HEK293 (cell line): ENCODE measurements at regions of chr22 and their contacts with region 1.

Region 1: DNA sequence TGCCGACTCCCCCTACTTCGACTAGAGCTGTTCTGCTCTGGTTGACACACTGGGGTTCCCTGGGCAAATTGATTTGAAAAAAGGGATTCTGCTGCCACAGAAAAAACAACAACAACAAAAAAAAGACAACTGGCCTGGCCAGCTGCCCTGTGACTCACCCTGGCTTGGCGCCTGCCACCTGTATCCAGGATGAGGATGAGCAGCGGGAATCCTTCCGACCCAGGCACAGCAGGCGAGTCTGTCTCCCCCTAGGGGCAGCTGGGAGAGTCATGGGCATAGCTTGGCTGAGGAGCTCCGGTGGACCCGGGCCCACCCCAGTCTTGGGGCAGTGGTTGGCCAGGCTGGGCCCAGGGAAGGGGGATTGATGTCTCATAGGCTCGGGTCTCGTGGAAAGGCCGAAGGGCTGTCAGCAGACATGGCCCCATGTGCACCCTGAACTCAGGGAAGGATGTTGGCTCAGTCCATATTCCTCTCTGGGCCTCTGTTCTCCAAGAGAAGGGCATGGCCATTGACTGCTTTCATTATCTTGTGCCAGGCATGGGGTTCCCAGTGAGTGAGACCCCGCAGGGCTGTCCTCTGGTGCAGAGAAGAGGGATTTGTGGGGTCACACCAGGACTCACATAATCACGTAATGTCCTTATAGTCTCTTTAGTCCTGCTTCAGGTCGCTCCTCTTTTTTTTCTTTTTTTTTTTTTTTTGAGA is 10.4 kb upstream of the SUN2 start:
- H3K4me3 ChIP-seq: no peak overlapping the region
- H3K27ac ChIP-seq: no peak overlapping the region
- H3K4me1 ChIP-seq: no peaks in the 10 kb centered on the region
- CTCF ChIP-seq: peak; percentile 73

Region 2: GRCh38 chr22:38638734-38639133 is 127.5 kb before region 1 on chr22:
- CTCF ChIA-PET with region 1: no interaction called
- POLR2A ChIA-PET with region 1: no interaction called
- H3K4me3 ChIP-seq: no peak overlapping the region
- H3K27ac ChIP-seq: no peak overlapping the region
- H3K4me1 ChIP-seq: no peaks in the 10 kb centered on the region
- CTCF ChIP-seq: no peak

Region 3: DNA sequence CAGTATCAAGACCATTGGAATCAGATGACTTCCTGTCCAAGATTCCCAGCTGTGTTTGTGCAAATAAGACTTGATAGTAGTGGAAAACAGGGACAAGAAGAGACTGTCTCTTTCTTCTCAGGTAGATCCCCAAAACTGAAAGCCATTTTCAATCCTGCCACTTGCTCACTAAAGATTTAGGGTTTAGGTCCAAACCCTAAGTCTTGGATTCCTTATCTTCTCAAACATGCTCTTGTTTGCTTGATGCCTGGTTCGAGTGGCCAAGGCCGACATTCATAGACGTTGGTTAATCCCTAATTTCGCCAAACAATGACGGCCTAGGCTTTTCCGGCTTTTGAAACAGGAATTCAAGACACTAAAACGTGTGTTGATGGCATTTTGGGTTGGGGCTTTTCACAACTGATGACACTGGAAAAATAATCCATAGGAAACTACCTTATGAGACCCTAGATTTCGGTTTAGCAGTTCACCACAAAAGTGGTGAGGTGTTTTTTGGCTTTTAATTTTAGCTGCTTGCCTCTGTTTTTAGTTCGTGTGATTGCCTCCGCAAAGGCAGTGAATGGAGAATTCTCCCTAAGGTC is 61.5 kb before region 1 on chr22:
- CTCF ChIA-PET with region 1: no interaction called
- POLR2A ChIA-PET with region 1: no interaction called
- H3K4me3 ChIP-seq: peak overlapping the region; percentile 32
- H3K27ac ChIP-seq: peak overlapping the region; percentile 63
- H3K4me1 ChIP-seq: peaks cover 13% of the 10 kb centered on the region
- CTCF ChIP-seq: no peak

Region 4: DNA sequence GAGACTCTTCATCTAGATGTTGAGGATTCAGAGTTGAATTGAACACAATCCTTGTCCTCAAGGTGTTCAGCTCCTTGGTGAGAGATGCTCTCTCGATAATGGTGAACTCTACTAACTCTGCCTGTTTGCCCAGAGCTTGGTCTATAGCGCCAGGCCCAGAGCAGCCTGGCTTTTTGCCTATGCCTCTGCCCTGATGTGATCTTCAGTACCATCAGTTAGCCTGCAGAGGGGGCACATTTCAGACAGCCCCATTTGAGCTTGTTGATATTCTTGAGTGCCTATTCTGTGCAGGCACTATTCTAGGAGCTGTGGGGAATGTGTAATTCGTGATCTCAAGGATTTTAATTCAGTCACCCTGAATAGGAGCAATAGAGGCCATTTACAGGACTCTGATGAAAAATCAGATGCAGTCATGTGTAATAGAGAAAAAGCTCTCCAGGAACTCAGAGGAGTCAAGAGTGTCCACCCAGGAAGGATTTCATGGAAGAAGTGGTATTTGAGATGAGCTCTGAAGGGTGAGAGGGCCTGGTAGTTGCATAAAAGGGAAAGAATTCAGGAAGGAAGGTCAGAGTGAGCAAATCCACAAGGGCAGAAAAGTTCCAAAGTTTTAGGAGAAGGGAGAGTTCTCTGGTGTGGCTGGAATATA is 41.2 kb before region 1 on chr22:
- CTCF ChIA-PET with region 1: interaction called, 11 read pairs
- POLR2A ChIA-PET with region 1: no interaction called
- H3K4me3 ChIP-seq: no peak overlapping the region
- H3K27ac ChIP-seq: peak overlapping the region; percentile 36; the same call in 1 of the 2 replicates
- H3K4me1 ChIP-seq: no peaks in the 10 kb centered on the region
- CTCF ChIP-seq: peak; percentile 32; the same call in 1 of the 2 replicates

Region 5: GRCh38 chr22:38782402-38783094 is 16.3 kb after region 1 on chr22:
- CTCF ChIA-PET with region 1: interaction called, 43 read pairs
- POLR2A ChIA-PET with region 1: interaction called, 3 read pairs
- H3K4me3 ChIP-seq: no peak overlapping the region
- H3K27ac ChIP-seq: no peak overlapping the region
- H3K4me1 ChIP-seq: no peaks in the 10 kb centered on the region
- CTCF ChIP-seq: no peak

Region 6: GRCh38 chr22:38824585-38824984 is 58.4 kb after region 1 on chr22:
- CTCF ChIA-PET with region 1: interaction called, 10 read pairs
- POLR2A ChIA-PET with region 1: no interaction called
- H3K4me3 ChIP-seq: no peak overlapping the region
- H3K27ac ChIP-seq: no peak overlapping the region
- H3K4me1 ChIP-seq: no peaks in the 10 kb centered on the region
- CTCF ChIP-seq: peak; percentile 67

Region 7: DNA sequence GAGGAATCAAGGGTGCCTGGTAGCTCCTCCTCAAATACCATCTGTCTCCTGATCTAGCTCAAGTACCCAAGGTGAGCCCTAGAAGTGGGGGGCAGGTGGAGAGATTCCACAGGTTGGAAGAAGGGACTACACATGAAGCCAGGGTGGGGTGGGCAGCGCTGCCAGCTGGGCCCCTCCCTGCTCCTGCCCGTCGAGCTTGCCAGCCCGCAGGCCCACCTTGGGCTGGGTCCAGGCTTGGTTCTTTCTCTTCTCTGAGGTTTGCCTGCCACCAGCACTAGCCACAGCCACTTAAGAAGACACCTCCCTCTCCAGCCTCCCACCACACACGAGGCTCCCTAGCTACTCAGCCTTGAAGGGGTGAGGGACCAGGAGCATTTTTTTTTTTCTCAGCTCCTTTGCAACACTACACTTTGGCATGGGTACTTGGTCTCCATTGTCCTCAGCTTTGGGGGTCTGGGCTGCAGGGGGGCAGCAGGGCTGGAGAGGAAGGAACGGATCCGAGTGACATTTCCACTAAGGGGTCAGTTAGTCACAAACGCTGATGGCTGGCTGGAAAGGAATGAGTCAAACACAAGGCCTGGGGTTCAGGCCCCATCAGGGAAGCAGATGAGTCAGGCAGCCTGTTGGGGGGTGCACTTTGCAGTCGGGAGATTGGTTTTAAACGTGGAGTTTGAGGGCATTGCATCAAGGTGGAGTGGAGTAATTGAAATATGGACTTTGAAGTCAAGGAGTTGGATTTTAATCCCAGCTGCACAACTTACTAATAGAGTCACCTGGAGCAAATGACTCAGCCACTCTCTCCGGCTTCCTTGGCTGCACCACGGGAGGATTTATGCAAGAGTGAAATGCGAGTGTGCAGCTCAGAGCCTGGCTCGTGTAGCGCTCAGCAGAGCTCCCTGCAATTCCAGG is 85.0 kb after region 1 on chr22:
- CTCF ChIA-PET with region 1: interaction called, 26 read pairs
- POLR2A ChIA-PET with region 1: interaction called, 3 read pairs
- H3K4me3 ChIP-seq: no peak overlapping the region
- H3K27ac ChIP-seq: no peak overlapping the region
- H3K4me1 ChIP-seq: no peaks in the 10 kb centered on the region
- CTCF ChIP-seq: no peak

Region 8: DNA sequence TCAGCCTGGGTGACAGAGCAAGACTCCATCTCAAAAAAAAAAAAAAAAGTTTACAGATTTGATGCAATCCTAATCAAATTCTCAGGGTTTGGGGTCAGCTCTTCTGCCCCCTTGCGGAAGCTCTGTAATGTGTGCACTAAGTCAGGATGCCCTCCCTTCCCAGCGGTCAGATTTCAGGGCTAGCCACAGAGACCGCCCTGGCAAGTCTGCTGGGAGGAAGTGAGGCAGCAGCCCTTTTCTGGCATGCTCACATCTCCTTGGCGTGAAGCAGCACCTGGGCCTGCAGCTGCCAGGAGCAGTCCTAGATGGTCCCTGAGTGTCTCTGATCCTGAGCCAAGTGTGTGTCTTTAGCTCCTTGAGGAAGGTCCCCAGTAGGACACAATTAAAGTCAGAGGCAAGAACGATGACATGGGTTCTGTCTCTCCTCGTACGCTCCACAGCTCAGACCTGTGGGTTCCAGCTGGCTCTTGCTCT is 237.0 kb after region 1 on chr22:
- CTCF ChIA-PET with region 1: interaction called, 63 read pairs
- POLR2A ChIA-PET with region 1: interaction called, 4 read pairs
- H3K4me3 ChIP-seq: no peak overlapping the region
- H3K27ac ChIP-seq: no peak overlapping the region
- H3K4me1 ChIP-seq: no peaks in the 10 kb centered on the region
- CTCF ChIP-seq: peak; percentile 76

Region 9: GRCh38 chr22:39414886-39415285 is 648.7 kb after region 1 on chr22:
- CTCF ChIA-PET with region 1: no interaction called
- POLR2A ChIA-PET with region 1: no interaction called
- H3K4me3 ChIP-seq: no peak overlapping the region
- H3K27ac ChIP-seq: no peak overlapping the region
- H3K4me1 ChIP-seq: no peaks in the 10 kb centered on the region
- CTCF ChIP-seq: no peak